ENCODE measurements at regions of chr15 and their contacts with region 1.

Region 1: GRCh38 chr15:81098861-81099651 is 35.0 kb upstream of the CFAP161 start:
- DNase-seq: peak; percentile 44 to 75
- ATAC-seq: peak; percentile 74 to 91 (median 85)
- H3K4me3 ChIP-seq: peak overlapping the region in 7 of 10 donors; percentile 4 to 28 (median 13)
- H3K27ac ChIP-seq: peak overlapping the region in 9 of 10 donors; percentile 27 to 81 (median 62)
- H3K4me1 ChIP-seq: peaks cover 0 to 58% (median 31%) of the 10 kb centered on the region in 9 donors
- H3K27me3 ChIP-seq: no peaks in the 10 kb centered on the region
- CTCF ChIP-seq: no peak

Region 2: GRCh38 chr15:80743187-80743833 is 355.7 kb before region 1 on chr15:
- intact Hi-C with region 1: no loop called
- DNase-seq: no peak
- ATAC-seq: no peak
- H3K4me3 ChIP-seq: no peak overlapping the region
- H3K27ac ChIP-seq: no peak overlapping the region
- H3K4me1 ChIP-seq: no peaks in the 10 kb centered on the region
- H3K27me3 ChIP-seq: no peaks in the 10 kb centered on the region
- CTCF ChIP-seq: no peak

Region 3: GRCh38 chr15:81029414-81030300 is 69.4 kb before region 1 on chr15:
- intact Hi-C with region 1: loop called in 1 of 10 experiments (anchors 5 kb)
- DNase-seq: no peak
- ATAC-seq: peak in 7 of 8 donors; percentile 16 to 71 (median 45)
- H3K4me3 ChIP-seq: no peak overlapping the region
- H3K27ac ChIP-seq: peak overlapping the region in 8 of 10 donors; percentile 0 to 80 (median 24)
- H3K4me1 ChIP-seq: peaks cover 0 to 75% (median 56%) of the 10 kb centered on the region in 9 donors
- H3K27me3 ChIP-seq: no peaks in the 10 kb centered on the region
- CTCF ChIP-seq: no peak

Region 4: GRCh38 chr15:81038975-81039607 is 60.0 kb before region 1 on chr15:
- intact Hi-C with region 1: loop called in 3 of 10 experiments (anchors 2 to 5 kb)
- DNase-seq: no peak
- ATAC-seq: peak; percentile 16 to 81 (median 68)
- H3K4me3 ChIP-seq: no peak overlapping the region
- H3K27ac ChIP-seq: peak overlapping the region in 7 of 10 donors; percentile 6 to 73 (median 48)
- H3K4me1 ChIP-seq: peaks cover 0 to 29% (median 13%) of the 10 kb centered on the region in 9 donors
- H3K27me3 ChIP-seq: no peaks in the 10 kb centered on the region
- CTCF ChIP-seq: no peak

Region 5: DNA sequence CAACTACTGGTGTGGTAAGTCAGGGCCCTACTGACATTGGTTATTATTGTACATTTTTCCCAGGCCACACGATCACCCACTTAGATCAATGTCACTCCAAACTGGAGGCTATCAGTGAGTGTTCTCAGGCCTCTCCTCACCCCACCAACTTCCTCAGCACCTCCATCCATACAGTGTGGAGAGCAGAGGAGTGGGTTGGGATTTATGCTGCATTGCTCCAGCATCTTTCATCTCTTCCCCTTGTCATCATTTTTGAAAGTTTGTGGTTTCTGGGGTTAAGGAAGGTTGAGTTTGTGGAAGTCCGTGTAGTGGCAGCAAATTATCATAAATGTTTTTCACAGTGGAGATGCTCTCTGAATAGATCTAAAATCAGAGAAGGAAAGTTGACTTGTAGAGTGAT is 38.1 kb before region 1 on chr15:
- intact Hi-C with region 1: loop called in 1 of 10 experiments (anchors 5 kb)
- DNase-seq: no peak
- ATAC-seq: peak in 1 of 8 donors; percentile 21
- H3K4me3 ChIP-seq: no peak overlapping the region
- H3K27ac ChIP-seq: no peak overlapping the region
- H3K4me1 ChIP-seq: peaks cover 0 to 15% (median 0%) of the 10 kb centered on the region in 9 donors
- H3K27me3 ChIP-seq: no peaks in the 10 kb centered on the region
- CTCF ChIP-seq: no peak